MCF 10A (cell line): ENCODE measurements at regions of chr18 and their contacts with region 1.

Region 1: DNA sequence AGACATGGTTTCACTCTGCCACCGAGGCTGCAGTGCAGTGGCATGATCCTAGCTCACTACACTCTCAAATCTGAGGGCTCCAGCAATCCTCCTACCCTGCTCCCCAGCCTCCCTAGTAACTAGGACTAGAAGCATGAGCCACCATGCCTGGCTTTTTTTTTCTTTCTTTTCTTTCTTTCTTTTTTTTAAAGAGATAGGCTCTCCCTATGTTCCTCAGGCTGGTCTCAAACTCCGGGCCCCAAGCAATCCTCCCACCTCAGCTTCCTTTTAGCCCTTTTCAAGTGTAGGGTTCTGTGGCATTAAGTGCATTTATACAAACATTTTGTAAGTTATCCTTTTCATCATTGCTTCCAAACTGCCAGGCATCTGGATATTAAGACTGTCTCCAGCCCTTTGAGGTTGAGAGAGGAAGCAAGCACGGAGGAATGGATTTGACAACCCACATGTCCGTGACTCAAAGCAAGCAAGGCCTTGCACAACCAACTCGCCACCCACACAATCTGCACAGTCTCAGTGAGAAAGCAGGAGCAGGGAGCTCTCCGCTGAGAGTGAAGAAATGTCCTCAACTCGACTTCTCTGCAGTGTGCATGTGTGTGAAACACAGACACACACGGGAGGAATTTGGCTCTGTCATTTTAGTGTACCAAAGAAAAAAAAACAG is 65.6 kb downstream of the ATP8B1 start:
- DNase-seq: peak; percentile 96
- H3K4me3 Mint-ChIP-seq: peak overlapping the region; percentile 54
- H3K27ac Mint-ChIP-seq: peak overlapping the region; percentile 65
- H3K4me1 Mint-ChIP-seq: peaks cover 17% of the 10 kb centered on the region
- H3K27me3 Mint-ChIP-seq: no peaks in the 10 kb centered on the region
- CTCF ChIP-seq: no peak

Region 2: DNA sequence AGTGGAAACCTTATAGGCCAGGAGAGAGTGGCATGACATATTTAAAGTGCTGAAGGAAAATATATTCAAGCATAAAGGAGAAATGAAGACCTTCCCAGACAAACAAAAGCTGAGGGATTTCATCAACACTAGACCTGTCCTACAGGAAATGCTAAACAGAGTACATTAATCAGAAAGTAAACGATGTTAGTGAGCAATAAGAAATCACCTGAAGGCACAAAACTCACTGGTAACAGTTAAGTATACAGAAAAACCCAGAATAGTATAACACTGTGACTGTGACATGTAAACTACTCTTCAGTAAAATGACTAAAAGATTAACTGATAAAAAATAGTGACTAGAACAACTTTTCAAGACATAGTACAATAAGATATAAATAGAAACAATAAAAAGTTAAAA is 21.8 kb before region 1 on chr18:
- CTCF ChIA-PET with region 1: interaction called, 4 read pairs
- POLR2A ChIA-PET with region 1: interaction called, 12 read pairs
- intact Hi-C with region 1: no loop called
- DNase-seq: no peak
- H3K4me3 Mint-ChIP-seq: no peak overlapping the region
- H3K27ac Mint-ChIP-seq: no peak overlapping the region
- H3K4me1 Mint-ChIP-seq: peaks cover 18% of the 10 kb centered on the region
- H3K27me3 Mint-ChIP-seq: no peaks in the 10 kb centered on the region
- CTCF ChIP-seq: no peak

Region 3: GRCh38 chr18:57748770-57749603 is 11.5 kb after region 1 on chr18:
- CTCF ChIA-PET with region 1: interaction called, 3 read pairs
- POLR2A ChIA-PET with region 1: interaction called, 23 read pairs
- intact Hi-C with region 1: no loop called
- DNase-seq: peak; percentile 69
- H3K4me3 Mint-ChIP-seq: no peak overlapping the region
- H3K27ac Mint-ChIP-seq: peak overlapping the region; percentile 5
- H3K4me1 Mint-ChIP-seq: peaks cover 15% of the 10 kb centered on the region
- H3K27me3 Mint-ChIP-seq: no peaks in the 10 kb centered on the region
- CTCF ChIP-seq: no peak

Region 4: DNA sequence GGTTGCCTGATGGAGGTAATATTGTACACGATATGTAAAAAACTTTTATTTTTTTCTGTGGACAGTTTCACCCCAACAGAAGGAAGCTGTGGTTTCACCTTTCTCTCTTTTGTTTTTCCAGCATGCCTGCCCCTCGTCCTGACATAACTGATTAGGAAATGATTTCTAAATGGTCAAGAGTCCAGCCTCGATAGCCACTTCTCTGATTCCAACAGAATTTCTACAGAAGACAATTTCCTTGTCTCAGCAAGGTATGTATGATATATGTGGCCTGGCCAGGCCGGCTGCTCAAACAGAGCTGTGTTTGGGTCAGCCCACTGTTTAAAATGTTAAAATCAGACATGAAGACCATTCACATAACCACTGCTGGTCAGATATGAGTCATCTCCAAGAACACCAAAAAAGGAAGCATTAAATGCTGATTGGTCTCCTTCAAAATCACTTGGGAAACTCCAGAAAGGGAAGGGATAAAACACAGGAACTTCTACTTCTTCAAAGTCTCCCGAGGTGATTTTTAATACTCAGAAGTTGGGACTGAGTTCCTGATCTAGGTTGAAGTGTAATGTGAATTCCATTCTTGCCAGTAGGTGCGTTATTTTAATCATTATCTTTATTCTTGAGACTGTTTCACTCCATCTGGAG is 43.3 kb after region 1 on chr18:
- CTCF ChIA-PET with region 1: no interaction called
- POLR2A ChIA-PET with region 1: interaction called, 10 read pairs
- intact Hi-C with region 1: loop called (anchors 5 kb)
- DNase-seq: peak; percentile 85
- H3K4me3 Mint-ChIP-seq: no peak overlapping the region
- H3K27ac Mint-ChIP-seq: peak overlapping the region; percentile 93
- H3K4me1 Mint-ChIP-seq: peaks cover 37% of the 10 kb centered on the region
- H3K27me3 Mint-ChIP-seq: no peaks in the 10 kb centered on the region
- CTCF ChIP-seq: no peak

Region 5: DNA sequence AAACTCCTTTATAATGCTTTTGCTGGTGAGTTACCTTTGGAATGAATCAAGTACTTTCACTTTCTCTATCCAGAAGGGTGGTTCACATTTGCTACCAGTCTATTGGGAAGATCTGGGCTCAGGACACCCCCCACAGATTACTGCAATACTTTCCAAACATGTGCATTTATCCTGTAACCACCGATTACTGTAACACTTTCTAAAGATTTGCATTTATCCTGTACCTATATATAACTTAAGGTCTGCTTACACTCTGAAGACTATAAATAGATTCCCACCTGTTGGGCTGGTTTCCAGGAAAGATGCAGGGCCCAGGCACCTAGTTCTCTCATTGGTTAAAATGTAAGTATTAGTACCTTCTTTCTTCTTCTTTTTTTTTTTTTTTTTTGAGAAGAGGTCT is 193.5 kb after region 1 on chr18:
- CTCF ChIA-PET with region 1: no interaction called
- POLR2A ChIA-PET with region 1: no interaction called
- intact Hi-C with region 1: no loop called
- DNase-seq: peak; percentile 36
- H3K4me3 Mint-ChIP-seq: no peak overlapping the region
- H3K27ac Mint-ChIP-seq: no peak overlapping the region
- H3K4me1 Mint-ChIP-seq: peaks cover 14% of the 10 kb centered on the region
- H3K27me3 Mint-ChIP-seq: no peaks in the 10 kb centered on the region
- CTCF ChIP-seq: no peak

Region 6: GRCh38 chr18:57943723-57944122 is 206.2 kb after region 1 on chr18:
- CTCF ChIA-PET with region 1: no interaction called
- POLR2A ChIA-PET with region 1: no interaction called
- intact Hi-C with region 1: no loop called
- DNase-seq: no peak
- H3K4me3 Mint-ChIP-seq: no peak overlapping the region
- H3K27ac Mint-ChIP-seq: no peak overlapping the region
- H3K4me1 Mint-ChIP-seq: peaks cover 23% of the 10 kb centered on the region
- H3K27me3 Mint-ChIP-seq: no peaks in the 10 kb centered on the region
- CTCF ChIP-seq: no peak